HepG2 (cell line): ENCODE measurements at regions of chr14 and their contacts with region 1.

Region 1: GRCh38 chr14:65164068-65164824 is 61.9 kb upstream of the MAX start:
- DNase-seq: peak; percentile 43
- ATAC-seq: peak; percentile 80
- H3K4me3 ChIP-seq: no peak overlapping the region
- H3K27ac ChIP-seq: no peak overlapping the region
- H3K4me1 ChIP-seq: peaks cover 11% of the 10 kb centered on the region
- H3K27me3 ChIP-seq: no peaks in the 10 kb centered on the region
- CTCF ChIP-seq: peak; percentile 68
- EP300 ChIP-seq: no peak
- POLR2A ChIP-seq: no peak
- RAD21 ChIP-seq: peak; percentile 71

Region 2: DNA sequence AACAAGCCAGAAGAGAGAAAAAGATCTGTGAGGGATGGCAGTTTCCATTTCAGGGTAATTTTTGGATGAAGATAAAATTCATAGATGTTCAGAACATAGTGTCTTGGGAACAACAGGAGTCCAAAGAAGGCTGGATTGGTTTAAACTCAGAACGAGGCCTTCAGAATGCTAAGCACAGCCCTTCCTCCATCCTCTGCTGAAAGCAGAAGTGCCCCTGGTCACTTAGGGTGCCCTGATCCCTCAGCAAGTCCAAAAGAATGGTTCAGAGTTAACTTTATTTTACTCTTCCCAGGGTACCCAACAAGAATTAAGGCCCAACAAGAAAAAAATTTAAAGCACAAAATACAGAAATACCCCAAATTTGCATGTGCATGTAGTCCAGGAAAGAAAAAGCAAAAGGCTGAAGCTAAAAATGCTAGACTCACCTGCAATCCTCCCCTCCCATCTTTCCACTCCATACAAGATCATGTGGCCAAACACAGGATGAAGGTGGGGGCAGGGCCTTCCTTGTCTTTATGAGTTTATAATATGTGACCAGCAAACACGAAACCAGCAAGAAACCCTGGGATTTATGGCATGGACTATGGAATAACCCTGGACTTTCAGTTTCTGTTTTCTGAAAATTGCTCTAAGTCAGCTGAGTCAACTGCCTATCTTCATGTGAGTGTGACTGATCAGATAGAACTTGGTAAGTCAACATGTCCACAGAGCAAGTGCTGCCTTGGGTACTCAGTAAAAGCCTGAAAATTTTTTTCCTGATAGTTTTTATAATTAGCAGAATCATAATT is 83.1 kb before region 1 on chr14:
- CTCF ChIA-PET with region 1: no interaction called
- POLR2A ChIA-PET with region 1: no interaction called
- in situ Hi-C with region 1: no loop called
- intact Hi-C with region 1: no loop called
- DNase-seq: peak; percentile 12
- ATAC-seq: peak; percentile 45; the same call in 2 of the 3 replicates
- H3K4me3 ChIP-seq: no peak overlapping the region
- H3K27ac ChIP-seq: no peak overlapping the region
- H3K4me1 ChIP-seq: 0 out of 2 replicates have a peak, but pooled peaks cover 12% of the 10 kb centered on the region
- H3K27me3 ChIP-seq: no peaks in the 10 kb centered on the region
- CTCF ChIP-seq: no peak
- EP300 ChIP-seq: no peak
- POLR2A ChIP-seq: no peak
- RAD21 ChIP-seq: no peak

Region 3: GRCh38 chr14:65206448-65207096 is 42.3 kb after region 1 on chr14:
- CTCF ChIA-PET with region 1: no interaction called
- POLR2A ChIA-PET with region 1: no interaction called
- in situ Hi-C with region 1: no loop called
- intact Hi-C with region 1: no loop called
- DNase-seq: no peak
- ATAC-seq: no peak
- H3K4me3 ChIP-seq: no peak overlapping the region
- H3K27ac ChIP-seq: no peak overlapping the region
- H3K4me1 ChIP-seq: peaks cover 45% of the 10 kb centered on the region
- H3K27me3 ChIP-seq: no peaks in the 10 kb centered on the region; a peak in 1 of 5 replicates
- CTCF ChIP-seq: no peak
- EP300 ChIP-seq: no peak
- POLR2A ChIP-seq: no peak
- RAD21 ChIP-seq: no peak

Region 4: GRCh38 chr14:65824285-65824977 is 660.2 kb after region 1 on chr14:
- CTCF ChIA-PET with region 1: interaction called, 22 read pairs
- POLR2A ChIA-PET with region 1: no interaction called
- in situ Hi-C with region 1: loop called (anchors 5 kb)
- intact Hi-C with region 1: loop called (anchors 1 kb)
- DNase-seq: peak; percentile 57
- ATAC-seq: peak; percentile 82
- H3K4me3 ChIP-seq: no peak overlapping the region
- H3K27ac ChIP-seq: no peak overlapping the region
- H3K4me1 ChIP-seq: no peaks in the 10 kb centered on the region
- H3K27me3 ChIP-seq: peaks cover 14 to 54% of the 10 kb centered on the region in 2 experiments
- CTCF ChIP-seq: peak; percentile 86
- EP300 ChIP-seq: no peak
- POLR2A ChIP-seq: no peak
- RAD21 ChIP-seq: peak; percentile 30; the same call in 1 of the 2 replicates

Region 5: GRCh38 chr14:65832431-65833266 is 668.4 kb after region 1 on chr14:
- CTCF ChIA-PET with region 1: interaction called, 4 read pairs
- POLR2A ChIA-PET with region 1: no interaction called
- in situ Hi-C with region 1: loop called (anchors 5 kb)
- intact Hi-C with region 1: loop called (anchors 1 kb)
- DNase-seq: peak; percentile 5
- ATAC-seq: peak; percentile 53; the same call in 2 of the 3 replicates
- H3K4me3 ChIP-seq: no peak overlapping the region
- H3K27ac ChIP-seq: no peak overlapping the region
- H3K4me1 ChIP-seq: no peaks in the 10 kb centered on the region
- H3K27me3 ChIP-seq: peaks cover 3 to 35% of the 10 kb centered on the region in 2 experiments; a peak in 4 of 5 replicates
- CTCF ChIP-seq: 0 out of 2 replicates have a peak, but pooled peaks have one; percentile 14
- EP300 ChIP-seq: no peak
- POLR2A ChIP-seq: no peak
- RAD21 ChIP-seq: no peak